Posterior cingulate gyrus (tissue), 11 donors: ENCODE measurements at regions of chr2 and their contacts with region 1.

Region 1: GRCh38 chr2:162297925-162298552 is 20.4 kb downstream of the IFIH1 start:
- DNase-seq: peak in 2 of 10 donors; percentile 31 to 61

Region 2: GRCh38 chr2:162221064-162221463 is 77.0 kb before region 1 on chr2:
- intact Hi-C with region 1: loop called (anchors 1 kb)
- DNase-seq: peak in 9 of 10 donors; percentile 31 to 93 (median 73)

Region 3: GRCh38 chr2:162280654-162281053 is 17.4 kb before region 1 on chr2:
- intact Hi-C with region 1: no loop called
- DNase-seq: no peak

Region 4: DNA sequence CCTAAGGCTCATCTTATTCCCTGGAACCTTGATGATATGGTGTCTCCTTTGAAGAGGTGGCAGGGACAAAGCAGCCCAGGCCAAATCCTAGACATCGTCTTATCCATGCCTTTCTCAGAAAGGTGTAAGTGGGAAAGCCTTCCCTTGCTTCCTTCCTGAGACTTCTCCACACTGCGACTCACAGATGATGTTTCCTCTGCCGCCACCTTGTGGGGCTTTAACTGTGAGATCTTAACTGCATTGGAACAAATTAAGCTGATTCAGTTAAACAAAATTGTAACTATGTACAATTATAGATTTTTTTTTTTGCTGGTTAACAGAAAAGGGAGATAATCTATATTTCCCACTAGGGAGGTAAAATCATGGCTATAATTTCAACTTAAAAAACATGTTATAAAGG is 35.9 kb after region 1 on chr2:
- intact Hi-C with region 1: no loop called
- DNase-seq: peak in 6 of 10 donors; percentile 20 to 84 (median 50)